Endothelial cell of umbilical vein (primary cell): ENCODE measurements at regions of chr11 and their contacts with region 1.

Region 1: GRCh38 chr11:86955361-86956120 is at the start of gene FZD4:
- DNase-seq: peak; percentile 92
- H3K4me3 ChIP-seq: peak within 1 kb of the TSS; percentile 75 to 98 (median 95)
- H3K27ac ChIP-seq: peak within 1 kb of the TSS; percentile 75
- H3K4me1 ChIP-seq: peaks cover 30% of the 10 kb centered on the region
- H3K27me3 ChIP-seq: no peaks in the 10 kb centered on the region
- CTCF ChIP-seq: peak in 1 of 2 donors; percentile 30
- POLR2A ChIP-seq: peak; percentile 99
- total RNA-seq, gene FZD4: 109 and 112 TPM in 2 replicates

Region 2: DNA sequence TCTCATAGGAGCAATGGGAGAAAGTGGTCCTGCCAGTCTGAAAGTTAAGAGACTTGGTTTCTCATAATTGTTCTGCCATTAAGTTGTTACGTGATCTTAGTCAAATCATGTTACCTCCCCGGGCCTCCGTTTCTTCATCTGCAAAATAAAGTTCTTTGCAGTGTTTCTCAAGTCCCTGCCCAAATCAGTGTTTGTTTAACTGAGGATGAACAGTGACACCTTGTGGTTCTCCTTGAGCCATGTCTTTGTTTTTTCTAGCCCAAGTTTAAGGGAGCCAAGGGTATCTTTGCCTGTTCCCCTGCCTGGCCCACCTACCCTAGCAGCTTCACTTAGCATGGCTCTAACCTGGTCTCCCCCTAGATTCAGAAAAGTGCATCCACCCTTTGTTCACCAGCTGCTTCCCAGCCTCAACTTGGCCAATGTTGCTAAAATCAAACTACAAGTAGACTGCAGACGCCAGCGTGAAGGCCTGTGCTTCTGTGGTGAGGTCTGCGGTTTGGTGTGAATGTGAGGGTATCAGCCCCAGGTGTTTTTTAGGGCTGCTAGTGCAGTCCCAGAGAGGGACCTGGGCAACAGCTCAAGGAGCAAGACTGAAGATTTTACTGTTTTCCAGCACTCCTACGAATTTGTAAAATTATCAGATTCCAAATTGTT is 35.9 kb before region 1 on chr11:
- CTCF ChIA-PET with region 1: no interaction called
- POLR2A ChIA-PET with region 1: no interaction called
- dilution Hi-C with region 1: no loop called
- intact Hi-C with region 1: no loop called
- DNase-seq: peak; percentile 88
- H3K4me3 ChIP-seq: no peak overlapping the region
- H3K27ac ChIP-seq: peak overlapping the region; percentile 100
- H3K4me1 ChIP-seq: peaks cover 48% of the 10 kb centered on the region
- H3K27me3 ChIP-seq: no peaks in the 10 kb centered on the region
- CTCF ChIP-seq: peak; percentile 60
- POLR2A ChIP-seq: no peak

Region 3: DNA sequence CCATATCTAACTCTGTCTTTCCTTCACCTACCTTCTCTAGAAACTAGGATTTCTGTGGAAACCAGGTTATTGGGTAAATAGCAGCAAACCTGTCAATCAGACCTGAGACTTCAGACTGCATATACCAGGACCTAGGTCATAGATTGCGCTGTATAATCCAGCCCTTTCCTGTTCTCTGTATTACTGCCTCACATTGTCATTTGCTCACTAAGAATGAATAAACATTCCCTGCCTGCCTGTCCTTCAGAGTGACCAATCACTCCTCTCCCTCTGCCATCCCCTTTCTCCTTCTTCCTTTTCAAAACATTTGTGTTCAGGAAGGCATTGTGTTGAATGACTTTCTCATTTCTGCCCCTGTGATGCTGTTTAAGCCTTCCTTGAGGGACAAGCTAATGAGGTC is 13.7 kb after region 1 on chr11:
- CTCF ChIA-PET with region 1: interaction called, 7 read pairs
- POLR2A ChIA-PET with region 1: interaction called, 5 read pairs
- dilution Hi-C with region 1: no loop called
- intact Hi-C with region 1: loop called (anchors 1 kb)
- DNase-seq: peak; percentile 90
- H3K4me3 ChIP-seq: no peak overlapping the region
- H3K27ac ChIP-seq: peak overlapping the region; percentile 65
- H3K4me1 ChIP-seq: peaks cover 15% of the 10 kb centered on the region
- H3K27me3 ChIP-seq: no peaks in the 10 kb centered on the region
- CTCF ChIP-seq: no peak
- POLR2A ChIP-seq: no peak

Region 4: DNA sequence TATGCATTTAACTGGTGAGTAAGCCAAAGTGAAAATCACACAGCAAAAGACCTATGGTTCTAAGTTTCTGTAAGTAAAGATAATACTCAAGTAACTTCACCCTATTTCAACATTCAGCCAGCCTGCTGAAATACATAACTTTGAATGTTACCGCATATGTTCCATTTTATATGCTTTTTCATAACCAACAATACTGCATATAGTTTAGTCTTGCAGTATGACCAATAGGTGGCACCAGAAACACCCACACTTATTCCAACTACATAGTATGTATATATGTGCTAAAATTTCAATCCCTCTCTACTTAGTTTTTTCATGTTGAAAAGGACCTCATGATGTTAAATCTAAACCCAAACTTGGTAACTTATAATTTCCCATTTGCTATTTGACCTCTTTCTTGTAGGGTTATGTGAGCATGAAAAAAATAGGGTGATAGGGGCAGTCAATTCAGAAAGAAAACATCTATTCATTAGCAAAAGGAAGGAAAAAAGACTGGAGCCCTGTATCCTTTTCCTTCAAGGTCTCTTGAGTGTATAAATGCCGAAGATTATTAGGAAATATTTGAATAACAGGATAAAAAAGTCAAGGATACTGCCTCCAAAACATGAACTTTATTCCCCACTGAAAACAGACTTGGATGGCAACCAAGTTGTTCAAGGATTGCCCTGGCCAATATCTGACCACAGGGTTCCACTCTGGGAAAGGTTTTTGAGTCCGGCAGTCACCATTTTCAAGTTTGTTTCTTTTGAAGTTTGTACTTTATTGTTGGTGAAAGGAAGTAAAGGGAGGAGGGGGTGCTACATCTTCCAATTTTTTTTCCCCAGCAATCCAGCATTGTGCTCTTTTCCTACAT is 23.4 kb after region 1 on chr11:
- CTCF ChIA-PET with region 1: interaction called, 10 read pairs
- POLR2A ChIA-PET with region 1: interaction called, 3 read pairs
- dilution Hi-C with region 1: no loop called
- intact Hi-C with region 1: no loop called
- DNase-seq: peak; percentile 82
- H3K4me3 ChIP-seq: no peak overlapping the region
- H3K27ac ChIP-seq: no peak overlapping the region
- H3K4me1 ChIP-seq: peaks cover 5% of the 10 kb centered on the region
- H3K27me3 ChIP-seq: no peaks in the 10 kb centered on the region
- CTCF ChIP-seq: peak; percentile 35 to 52
- POLR2A ChIP-seq: no peak

Region 5: DNA sequence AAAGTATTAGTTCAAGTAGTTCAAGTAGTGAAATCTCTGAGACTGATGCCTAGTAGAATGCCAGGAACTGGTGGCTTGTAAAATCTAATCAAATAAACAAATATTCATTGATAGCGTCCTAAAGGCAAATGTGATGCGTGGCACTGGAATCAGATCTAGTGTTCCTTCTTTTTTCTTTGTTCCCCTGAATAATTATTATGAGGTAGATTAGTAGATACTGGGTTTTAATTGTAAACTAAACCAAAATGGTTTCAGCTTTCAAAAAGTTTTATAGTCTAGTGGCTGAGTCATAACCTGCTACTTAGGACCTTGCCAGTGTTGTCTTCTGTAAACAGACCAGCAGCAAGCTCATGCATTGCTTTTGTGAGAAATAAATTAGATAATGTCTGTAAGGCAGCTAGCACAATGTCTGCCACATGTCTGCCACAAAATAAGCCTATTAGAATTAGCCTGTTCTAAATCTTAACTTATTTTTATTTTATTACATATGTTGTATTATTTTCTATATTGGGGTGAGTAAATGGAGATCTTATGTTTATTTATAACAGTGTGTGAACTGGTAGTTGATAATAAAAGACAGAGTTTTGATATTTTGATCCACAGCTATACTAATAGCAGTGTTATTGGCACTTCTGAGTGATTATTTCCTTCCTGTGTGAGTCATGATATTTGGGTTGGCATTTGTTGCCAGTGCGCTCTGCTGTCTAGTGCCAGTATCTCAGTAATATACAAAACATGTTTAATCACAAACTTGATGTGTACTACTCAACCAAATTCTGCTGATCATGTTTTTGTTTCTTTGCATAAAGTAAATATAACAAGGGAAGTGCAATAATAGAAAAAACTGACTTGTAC is 217.9 kb after region 1 on chr11:
- CTCF ChIA-PET with region 1: interaction called, 3 read pairs
- POLR2A ChIA-PET with region 1: no interaction called
- dilution Hi-C with region 1: no loop called
- intact Hi-C with region 1: loop called (anchors 1 kb)
- DNase-seq: peak; percentile 94
- H3K4me3 ChIP-seq: no peak overlapping the region
- H3K27ac ChIP-seq: peak overlapping the region; percentile 70
- H3K4me1 ChIP-seq: peaks cover 25% of the 10 kb centered on the region
- H3K27me3 ChIP-seq: no peaks in the 10 kb centered on the region
- CTCF ChIP-seq: no peak
- POLR2A ChIP-seq: no peak

Region 6: GRCh38 chr11:87281496-87281895 is 326.0 kb after region 1 on chr11:
- CTCF ChIA-PET with region 1: interaction called, 8 read pairs
- POLR2A ChIA-PET with region 1: no interaction called
- dilution Hi-C with region 1: no loop called
- intact Hi-C with region 1: loop called (anchors 2 kb)
- DNase-seq: peak; percentile 96
- H3K4me3 ChIP-seq: no peak overlapping the region
- H3K27ac ChIP-seq: no peak overlapping the region
- H3K4me1 ChIP-seq: peaks cover 9% of the 10 kb centered on the region
- H3K27me3 ChIP-seq: no peaks in the 10 kb centered on the region
- CTCF ChIP-seq: peak in 1 of 2 donors; percentile 22
- POLR2A ChIP-seq: no peak